Esophagus squamous epithelium (tissue), 5 donors: ENCODE measurements at regions of chr5 and their contacts with region 1.

Region 1: GRCh38 chr5:78294248-78295034 is at the start of gene AP3B1:
- DNase-seq: peak; percentile 96
- H3K4me3 ChIP-seq: peak within 1 kb of the TSS; percentile 66 to 94 (median 90)
- H3K27ac ChIP-seq: peak within 1 kb of the TSS; percentile 88 to 94 (median 93)
- H3K4me1 ChIP-seq: peaks cover 0 to 45% (median 24%) of the 10 kb centered on the region in 3 donors
- H3K27me3 ChIP-seq: no peaks in the 10 kb centered on the region
- CTCF ChIP-seq: peak in 2 of 6 experiments; percentile 23 to 33
- POLR2A ChIP-seq: peak in 3 of 4 donors; percentile 80 to 95 (median 86)
- total RNA-seq, gene AP3B1: 30.7 to 48.5 (median 41.9) TPM

Region 2: GRCh38 chr5:77816671-77817070 is 477.8 kb before region 1 on chr5:
- intact Hi-C with region 1: no loop called
- DNase-seq: no peak
- H3K4me3 ChIP-seq: no peak overlapping the region
- H3K27ac ChIP-seq: no peak overlapping the region
- H3K4me1 ChIP-seq: peaks cover 0 to 8% (median 0%) of the 10 kb centered on the region in 3 donors
- H3K27me3 ChIP-seq: no peaks in the 10 kb centered on the region
- CTCF ChIP-seq: no peak
- POLR2A ChIP-seq: no peak

Region 3: DNA sequence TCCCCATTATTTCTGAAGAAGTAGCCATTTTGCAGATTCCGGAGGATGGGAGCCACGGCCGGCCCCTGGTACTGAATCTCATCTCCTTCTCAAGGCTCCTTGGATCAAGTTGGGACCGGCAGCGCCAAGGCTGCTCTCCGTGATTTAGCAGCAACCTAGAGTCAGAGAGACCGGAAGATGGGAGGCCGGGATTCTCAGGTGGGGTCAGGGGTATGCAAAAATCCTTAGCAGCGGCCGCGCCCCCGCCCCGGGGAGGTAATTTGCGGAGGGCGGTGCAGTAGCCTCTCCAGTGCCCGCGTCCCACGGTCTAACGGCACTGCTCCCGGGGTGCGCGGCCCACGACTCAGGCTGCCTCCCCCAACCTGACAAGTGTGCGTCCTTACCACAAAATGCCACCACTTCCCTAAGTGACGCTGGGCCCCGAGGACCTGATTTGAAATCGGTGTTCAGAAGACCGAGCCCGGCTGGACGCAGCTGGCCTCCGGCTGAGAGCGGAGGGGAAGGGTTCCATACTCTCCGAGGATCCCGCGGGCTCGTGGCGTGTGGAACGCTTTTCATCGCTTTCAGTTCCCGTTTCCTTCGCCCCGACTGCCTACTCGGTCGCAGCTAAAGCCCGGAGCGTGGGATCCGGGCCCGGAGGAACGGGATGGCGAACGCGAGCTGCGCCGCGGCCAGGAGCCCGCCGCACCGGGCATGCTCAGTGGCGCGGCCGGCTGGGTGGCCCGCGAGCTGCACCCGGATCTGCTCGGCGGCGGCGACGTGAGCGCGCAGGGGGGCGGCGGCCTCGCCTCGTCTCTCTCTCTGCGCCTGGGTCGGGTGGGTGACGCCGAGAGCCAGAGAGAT is 65.6 kb after region 1 on chr5 and contains the start of gene SCAMP1:
- intact Hi-C with region 1: loop called (anchors 5 kb)
- DNase-seq: peak; percentile 39
- H3K4me3 ChIP-seq: peak within 1 kb of the TSS; percentile 90 to 99 (median 98)
- H3K27ac ChIP-seq: peak within 1 kb of the TSS; percentile 92 to 95 (median 93)
- H3K4me1 ChIP-seq: peaks cover 9 to 37% (median 10%) of the 10 kb centered on the region in 3 donors
- H3K27me3 ChIP-seq: no peaks in the 10 kb centered on the region
- CTCF ChIP-seq: peak in 5 of 6 experiments; percentile 15 to 67 (median 50)
- POLR2A ChIP-seq: peak in 3 of 4 donors; percentile 63 to 86 (median 85)
- total RNA-seq, gene SCAMP1: 15.2 to 27.6 (median 21.3) TPM